OCI-LY7 (cell line): ENCODE measurements at regions of chrX and their contacts with region 1.

Region 1: DNA sequence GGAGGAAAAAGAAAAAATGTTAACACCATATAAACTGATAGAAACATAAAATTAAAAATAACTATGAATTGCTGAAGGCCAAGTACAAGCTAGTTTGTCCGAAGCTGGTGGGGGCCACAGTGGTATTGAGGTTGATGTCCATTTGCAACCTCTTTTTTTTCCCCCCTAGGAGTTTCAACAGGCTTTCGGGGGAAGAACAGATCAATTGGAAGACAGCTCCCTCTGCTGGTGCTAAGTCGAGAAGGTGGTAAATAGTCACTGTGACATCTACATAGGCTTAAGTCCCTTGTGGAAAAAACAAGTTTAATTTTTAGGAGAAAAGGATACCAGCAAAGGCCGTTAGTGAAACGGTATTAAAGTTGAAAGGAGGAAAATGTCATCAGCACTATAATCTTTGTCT is 115.7 kb upstream of the ZXDA start:
- DNase-seq: peak; percentile 59
- H3K4me3 ChIP-seq: no peak overlapping the region
- H3K27ac ChIP-seq: no peak overlapping the region
- H3K4me1 ChIP-seq: no peaks in the 10 kb centered on the region
- CTCF ChIP-seq: peak; percentile 77

Region 2: DNA sequence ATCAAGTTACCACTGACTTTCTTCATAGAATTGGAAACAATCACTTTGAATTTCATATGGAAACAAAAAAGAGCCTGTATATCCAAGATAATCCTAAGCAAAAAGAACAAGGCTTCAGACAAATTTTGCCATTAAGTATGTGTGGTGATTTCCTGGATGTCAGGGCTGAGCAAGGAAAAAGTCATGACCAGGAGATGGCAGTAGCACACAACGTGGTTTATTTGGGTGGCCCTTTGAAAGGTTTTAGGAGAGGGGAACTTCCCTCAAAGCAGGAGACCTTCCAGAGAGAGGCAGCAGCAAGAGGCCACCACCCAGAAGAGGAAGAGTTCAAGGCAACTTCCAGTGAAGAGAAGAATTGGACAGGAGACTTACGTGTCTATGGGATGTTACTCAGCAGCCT is 452.2 kb before region 1 on chrX:
- CTCF ChIA-PET with region 1: no interaction called
- POLR2A ChIA-PET with region 1: no interaction called
- intact Hi-C with region 1: loop called (anchors 10 kb)
- DNase-seq: peak; percentile 31
- H3K4me3 ChIP-seq: no peak overlapping the region
- H3K27ac ChIP-seq: no peak overlapping the region
- H3K4me1 ChIP-seq: no peaks in the 10 kb centered on the region
- CTCF ChIP-seq: peak; percentile 70

Region 3: GRCh38 chrX:57821703-57822375 is 204.1 kb before region 1 on chrX:
- CTCF ChIA-PET with region 1: no interaction called
- POLR2A ChIA-PET with region 1: no interaction called
- intact Hi-C with region 1: loop called (anchors 1 kb)
- DNase-seq: peak; percentile 65
- H3K4me3 ChIP-seq: no peak overlapping the region
- H3K27ac ChIP-seq: no peak overlapping the region
- H3K4me1 ChIP-seq: no peaks in the 10 kb centered on the region
- CTCF ChIP-seq: peak; percentile 76

Region 4: DNA sequence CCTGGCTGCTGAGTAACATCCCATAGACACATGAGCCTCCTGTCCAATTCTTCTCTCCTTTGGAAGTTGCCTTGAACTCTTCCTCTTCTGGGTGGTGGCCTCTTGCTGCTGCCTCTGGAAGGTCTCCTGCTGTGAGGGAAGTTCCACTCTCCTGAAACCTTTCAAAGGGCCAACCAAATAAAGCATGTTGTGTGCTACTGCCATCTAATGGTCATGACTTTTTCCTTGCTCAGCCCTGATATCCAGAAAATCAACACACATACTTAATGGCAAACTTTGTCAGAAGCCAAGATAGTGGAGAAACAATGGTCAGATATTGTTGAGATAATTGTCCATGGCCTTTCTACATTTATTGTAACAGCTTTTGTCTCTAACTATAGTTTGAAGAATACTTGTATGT is 96.6 kb before region 1 on chrX:
- CTCF ChIA-PET with region 1: no interaction called
- POLR2A ChIA-PET with region 1: no interaction called
- intact Hi-C with region 1: loop called (anchors 5 kb)
- DNase-seq: peak; percentile 44
- H3K4me3 ChIP-seq: no peak overlapping the region
- H3K27ac ChIP-seq: no peak overlapping the region
- H3K4me1 ChIP-seq: no peaks in the 10 kb centered on the region
- CTCF ChIP-seq: peak; percentile 75

Region 5: DNA sequence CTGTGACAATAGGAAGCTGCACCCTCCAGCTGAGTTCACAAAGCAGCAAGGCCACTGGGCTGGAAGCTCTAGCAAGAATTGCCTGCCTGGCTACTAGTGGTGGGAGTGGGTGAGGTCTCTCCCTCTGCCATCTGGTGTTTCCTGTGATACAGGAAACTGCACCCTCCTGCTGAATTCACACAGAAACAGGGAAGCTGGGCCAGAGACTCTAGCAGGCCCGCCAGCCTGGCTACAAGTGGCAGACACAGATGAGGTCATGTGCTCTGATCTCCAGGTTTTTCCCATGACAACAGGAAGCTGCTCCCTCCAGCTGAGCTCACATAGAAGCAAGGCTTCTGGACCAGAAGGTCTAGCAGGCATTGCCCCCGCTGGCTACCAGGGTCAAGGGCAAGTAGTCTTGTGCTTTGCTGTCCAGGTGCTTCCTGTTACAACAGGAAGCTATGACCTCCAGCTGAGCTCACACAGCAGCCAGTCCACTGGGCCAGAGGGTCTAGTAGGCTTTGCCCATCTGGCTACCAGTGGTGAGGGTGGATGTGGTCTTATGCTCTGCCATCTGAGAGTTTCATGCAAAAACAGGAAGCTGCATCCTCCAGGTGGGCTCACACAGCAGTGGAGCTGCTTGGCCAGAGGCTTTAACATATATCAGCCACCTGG is 74.2 kb before region 1 on chrX:
- CTCF ChIA-PET with region 1: no interaction called
- POLR2A ChIA-PET with region 1: no interaction called
- intact Hi-C with region 1: loop called (anchors 10 kb)
- DNase-seq: peak; percentile 94
- H3K4me3 ChIP-seq: peak overlapping the region; percentile 45
- H3K27ac ChIP-seq: peak overlapping the region; percentile 97
- H3K4me1 ChIP-seq: peaks cover 35% of the 10 kb centered on the region
- CTCF ChIP-seq: no peak